AG04450 (cell line): ENCODE measurements at regions of chr7 and their contacts with region 1.

Region 1: DNA sequence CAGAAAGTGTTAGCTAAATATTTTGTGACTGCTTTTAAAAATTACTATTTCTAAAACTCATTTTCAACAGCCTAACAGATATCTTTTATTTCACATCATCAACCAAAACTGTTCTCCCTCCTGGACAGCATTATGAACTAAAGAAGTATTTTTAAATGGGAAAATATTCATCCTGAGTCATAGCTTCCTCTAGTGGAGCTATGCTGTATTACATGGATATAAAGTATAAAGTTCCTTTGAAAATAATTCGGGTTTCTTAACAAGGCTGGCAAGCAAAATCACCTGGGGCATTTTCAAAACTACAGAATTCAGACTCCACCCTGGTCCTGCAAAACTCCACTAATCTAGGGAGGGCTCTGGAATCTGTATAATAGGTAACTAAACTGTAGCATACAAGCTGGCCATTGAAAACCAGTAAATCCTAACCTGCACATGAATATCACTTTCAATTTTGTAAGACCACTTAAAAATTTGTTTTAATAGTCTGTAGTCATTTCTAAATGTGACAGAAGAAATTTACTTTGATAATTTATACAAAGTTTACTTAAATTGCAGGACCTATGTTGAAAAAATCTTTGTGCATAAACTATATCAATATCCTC is 53.5 kb downstream of the SCIN start:
- DNase-seq: no peak
- H3K4me3 ChIP-seq: no peak overlapping the region
- H3K27ac ChIP-seq: no peak overlapping the region
- H3K27me3 ChIP-seq: no peaks in the 10 kb centered on the region
- CTCF ChIP-seq: peak; percentile 88

Region 2: DNA sequence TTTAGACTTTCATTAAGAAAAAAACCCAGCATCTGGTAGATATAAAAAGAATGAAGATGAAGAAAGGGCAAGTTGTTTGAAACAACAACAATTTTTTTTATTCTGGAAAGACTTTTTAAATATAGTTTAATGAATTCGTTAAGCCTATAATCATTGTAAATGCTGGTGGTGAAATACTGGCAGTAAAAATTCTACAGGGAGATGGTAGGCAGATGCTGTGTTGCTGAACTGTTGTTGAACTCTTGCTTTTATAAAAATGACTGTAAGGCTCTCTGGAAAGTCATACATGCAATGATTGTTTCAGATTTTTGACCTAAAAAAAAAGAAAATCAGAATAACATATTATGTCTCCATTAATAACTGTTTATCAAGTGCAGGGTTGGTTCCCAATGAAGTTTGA is 14.4 kb before region 1 on chr7:
- CTCF ChIA-PET with region 1: interaction called, 19 read pairs
- POLR2A ChIA-PET with region 1: no interaction called
- DNase-seq: no peak
- H3K4me3 ChIP-seq: no peak overlapping the region
- H3K27ac ChIP-seq: no peak overlapping the region
- H3K27me3 ChIP-seq: no peaks in the 10 kb centered on the region
- CTCF ChIP-seq: no peak

Region 3: DNA sequence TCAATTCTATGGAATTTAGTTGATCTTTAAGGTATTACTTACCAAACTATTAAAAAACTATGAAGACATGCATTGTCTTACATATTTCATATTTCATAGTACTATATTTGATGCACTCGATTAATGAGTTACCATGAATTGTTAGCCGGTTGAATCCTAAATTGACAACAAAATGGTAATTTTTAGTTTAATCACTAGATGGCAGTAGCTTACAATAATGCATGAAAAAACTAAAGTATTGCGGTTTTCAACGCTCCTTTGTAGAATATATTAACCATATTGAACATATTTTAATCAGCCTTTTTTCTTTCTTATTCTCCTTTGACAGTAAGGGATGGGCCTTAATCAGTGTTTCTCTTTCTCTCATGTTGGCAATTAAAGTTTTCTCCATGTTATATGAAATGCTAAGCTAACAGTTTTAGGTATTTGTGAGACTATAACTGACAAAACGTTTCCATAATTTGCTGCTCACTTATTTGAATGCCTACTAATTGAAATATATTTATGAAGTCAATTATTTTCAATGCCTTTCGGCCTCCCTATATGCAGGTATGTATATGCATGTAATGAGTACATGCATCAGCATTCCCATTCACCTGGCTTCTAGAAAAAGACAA is 15.0 kb after region 1 on chr7:
- CTCF ChIA-PET with region 1: interaction called, 14 read pairs
- POLR2A ChIA-PET with region 1: no interaction called
- DNase-seq: no peak
- H3K4me3 ChIP-seq: no peak overlapping the region
- H3K27ac ChIP-seq: no peak overlapping the region
- H3K27me3 ChIP-seq: no peaks in the 10 kb centered on the region
- CTCF ChIP-seq: peak; percentile 62

Region 4: GRCh38 chr7:13262929-13263530 is 639.0 kb after region 1 on chr7:
- CTCF ChIA-PET with region 1: interaction called, 12 read pairs
- POLR2A ChIA-PET with region 1: no interaction called
- DNase-seq: peak; percentile 24
- H3K4me3 ChIP-seq: no peak overlapping the region
- H3K27ac ChIP-seq: no peak overlapping the region
- H3K27me3 ChIP-seq: no peaks in the 10 kb centered on the region
- CTCF ChIP-seq: peak; percentile 61